ENCODE measurements at regions of chr3 and their contacts with region 1.

Region 1: GRCh38 chr3:58433400-58434169 is at the start of gene PDHB:
- DNase-seq: peak; percentile 93
- ATAC-seq: peak; percentile 94
- H3K4me3 ChIP-seq: peak within 1 kb of the TSS; percentile 75 to 93 (median 91)
- H3K4me3 Mint-ChIP-seq: peak within 1 kb of the TSS; percentile 97
- H3K27ac ChIP-seq: peak within 1 kb of the TSS; percentile 82 to 87
- H3K27ac Mint-ChIP-seq: peak within 1 kb of the TSS; percentile 98
- H3K4me1 ChIP-seq: peaks cover 9 to 22% of the 10 kb centered on the region in 2 donors
- H3K4me1 Mint-ChIP-seq: peaks cover 25% of the 10 kb centered on the region
- H3K27me3 ChIP-seq: no peaks in the 10 kb centered on the region
- H3K27me3 Mint-ChIP-seq: no peaks in the 10 kb centered on the region
- CTCF ChIP-seq: no peak
- total RNA-seq, gene PDHB: 59.0 and 67.2 TPM in 2 replicates

Region 2: DNA sequence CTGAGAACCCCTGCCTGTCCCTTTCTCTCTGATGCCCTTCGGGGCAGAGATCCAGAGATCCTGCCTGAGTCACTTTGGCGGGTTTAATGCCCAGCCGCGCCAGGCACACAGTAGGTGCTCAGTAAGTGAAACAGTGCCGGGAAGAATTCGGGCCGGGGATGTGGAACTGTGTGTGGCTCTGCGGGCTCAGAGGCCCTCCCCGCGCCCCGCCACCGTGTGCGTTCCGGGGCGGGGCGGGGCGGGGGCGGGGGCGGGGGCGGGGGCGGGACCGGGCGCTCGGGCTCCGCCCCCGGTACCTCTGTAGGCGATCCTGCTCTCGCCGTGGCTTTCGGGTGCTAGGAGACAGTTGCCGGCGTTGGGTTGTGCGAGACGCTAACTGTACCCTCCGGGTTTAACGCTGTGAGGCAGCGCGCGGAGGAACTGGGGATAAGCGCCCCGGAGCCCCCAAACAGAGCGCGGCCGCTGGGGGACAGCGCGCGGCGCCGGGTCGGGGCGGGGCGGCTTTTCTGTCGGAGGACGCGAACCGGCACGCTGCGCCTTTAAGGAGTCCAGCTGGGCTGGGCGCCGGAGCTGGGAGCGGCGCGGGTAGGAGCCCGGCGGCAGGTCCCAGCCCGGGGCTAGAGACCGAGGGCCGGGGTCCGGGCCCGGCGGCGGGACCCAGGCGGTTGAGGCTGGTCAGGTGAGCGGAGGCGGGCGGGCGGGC is 196.2 kb before region 1 on chr3 and contains the start of gene ABHD6:
- CTCF ChIA-PET with region 1: no interaction called
- POLR2A ChIA-PET with region 1: no interaction called
- intact Hi-C with region 1: loop called (anchors 5 kb)
- DNase-seq: peak; percentile 93
- ATAC-seq: peak; percentile 75
- H3K4me3 ChIP-seq: peak within 1 kb of the TSS; percentile 51 to 96 (median 93)
- H3K4me3 Mint-ChIP-seq: peak within 1 kb of the TSS; percentile 97
- H3K27ac ChIP-seq: peak within 1 kb of the TSS; percentile 63 to 86
- H3K27ac Mint-ChIP-seq: peak within 1 kb of the TSS; percentile 94
- H3K4me1 ChIP-seq: peaks cover 41 to 48% of the 10 kb centered on the region in 2 donors
- H3K4me1 Mint-ChIP-seq: peaks cover 70% of the 10 kb centered on the region
- H3K27me3 ChIP-seq: no peaks in the 10 kb centered on the region
- H3K27me3 Mint-ChIP-seq: no peaks in the 10 kb centered on the region
- CTCF ChIP-seq: peak; percentile 15
- total RNA-seq, gene ABHD6: 22.2 and 24.2 TPM in 2 replicates

Region 3: DNA sequence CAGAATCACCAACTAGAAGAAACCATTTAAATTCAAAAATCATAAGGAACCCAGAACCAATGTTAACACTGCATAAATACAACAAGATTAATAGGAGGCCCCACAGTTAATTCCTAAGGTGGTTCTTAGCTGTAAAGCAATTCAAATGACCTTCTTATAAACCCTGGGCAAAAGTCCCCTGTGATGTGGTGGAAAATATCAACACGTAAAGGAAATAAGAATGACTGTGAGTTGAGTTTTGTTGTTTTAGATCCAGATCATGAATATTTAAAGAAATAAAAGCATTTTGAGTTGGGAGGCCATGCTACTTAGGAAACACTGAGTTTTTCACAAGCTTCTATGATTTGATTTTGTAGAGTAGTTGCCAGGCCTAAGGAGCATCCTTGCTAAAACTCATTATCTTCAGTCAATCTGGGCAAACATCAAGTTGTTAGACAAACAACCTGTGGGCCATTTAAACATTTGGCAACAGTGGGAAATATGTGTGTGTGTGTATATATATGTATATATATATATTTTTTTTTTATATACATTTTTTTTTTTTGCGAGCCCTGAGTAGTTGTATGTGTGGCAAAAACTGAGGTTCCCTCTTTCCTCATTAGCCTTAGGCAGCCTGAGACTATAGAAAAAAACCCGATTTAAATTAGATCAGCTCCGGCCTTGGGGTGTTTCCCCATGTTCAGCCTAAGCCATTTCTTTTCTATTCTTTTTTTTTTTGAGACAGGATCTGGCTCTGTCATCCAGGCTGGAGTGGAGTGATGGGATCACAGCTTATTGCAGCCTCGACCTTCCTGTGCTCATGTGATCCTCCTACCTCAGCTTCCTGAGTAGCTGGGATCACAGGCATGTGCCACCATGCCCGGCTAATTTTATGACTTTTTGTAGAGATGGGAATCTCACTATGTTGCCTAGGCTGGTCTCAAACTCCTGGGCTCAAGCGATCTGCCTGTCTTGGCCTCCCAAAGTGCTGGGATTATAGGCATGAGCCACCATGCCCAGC is 108.9 kb before region 1 on chr3:
- CTCF ChIA-PET with region 1: no interaction called
- POLR2A ChIA-PET with region 1: no interaction called
- intact Hi-C with region 1: loop called (anchors 5 kb)
- DNase-seq: no peak
- ATAC-seq: peak; percentile 39
- H3K4me3 ChIP-seq: no peak overlapping the region
- H3K4me3 Mint-ChIP-seq: peak overlapping the region; percentile 57
- H3K27ac ChIP-seq: peak overlapping the region in 1 of 2 donors; percentile 62
- H3K27ac Mint-ChIP-seq: peak overlapping the region; percentile 74
- H3K4me1 ChIP-seq: peaks cover 21 to 29% of the 10 kb centered on the region in 2 donors
- H3K4me1 Mint-ChIP-seq: peaks cover 38% of the 10 kb centered on the region
- H3K27me3 ChIP-seq: no peaks in the 10 kb centered on the region
- H3K27me3 Mint-ChIP-seq: no peaks in the 10 kb centered on the region
- CTCF ChIP-seq: no peak

Region 4: GRCh38 chr3:58349792-58350626 is 83.6 kb before region 1 on chr3:
- CTCF ChIA-PET with region 1: interaction called, 4 read pairs
- POLR2A ChIA-PET with region 1: interaction called, 4 read pairs
- intact Hi-C with region 1: loop called (anchors 2 kb)
- DNase-seq: peak; percentile 84
- ATAC-seq: peak; percentile 78
- H3K4me3 ChIP-seq: peak overlapping the region; percentile 2 to 58 (median 31)
- H3K4me3 Mint-ChIP-seq: peak overlapping the region; percentile 66
- H3K27ac ChIP-seq: peak overlapping the region; percentile 80 to 97
- H3K27ac Mint-ChIP-seq: peak overlapping the region; percentile 100
- H3K4me1 ChIP-seq: peaks cover 90 to 98% of the 10 kb centered on the region in 2 donors
- H3K4me1 Mint-ChIP-seq: peaks cover 87% of the 10 kb centered on the region
- H3K27me3 ChIP-seq: no peaks in the 10 kb centered on the region
- H3K27me3 Mint-ChIP-seq: no peaks in the 10 kb centered on the region
- CTCF ChIP-seq: no peak

Region 5: GRCh38 chr3:58419780-58420507 is 13.6 kb before region 1 on chr3:
- CTCF ChIA-PET with region 1: interaction called, 4 read pairs
- POLR2A ChIA-PET with region 1: interaction called, 6 read pairs
- intact Hi-C with region 1: loop called (anchors 2 kb)
- DNase-seq: no peak
- ATAC-seq: peak; percentile 68
- H3K4me3 ChIP-seq: no peak overlapping the region
- H3K4me3 Mint-ChIP-seq: peak overlapping the region; percentile 54
- H3K27ac ChIP-seq: peak overlapping the region; percentile 42 to 69
- H3K27ac Mint-ChIP-seq: peak overlapping the region; percentile 84
- H3K4me1 ChIP-seq: peaks cover 6 to 25% of the 10 kb centered on the region in 2 donors
- H3K4me1 Mint-ChIP-seq: peaks cover 37% of the 10 kb centered on the region
- H3K27me3 ChIP-seq: no peaks in the 10 kb centered on the region
- H3K27me3 Mint-ChIP-seq: no peaks in the 10 kb centered on the region
- CTCF ChIP-seq: no peak

Region 6: GRCh38 chr3:58532794-58533220 is 99.2 kb after region 1 on chr3:
- CTCF ChIA-PET with region 1: no interaction called
- POLR2A ChIA-PET with region 1: no interaction called
- intact Hi-C with region 1: loop called (anchors 1 kb)
- DNase-seq: peak; percentile 89
- ATAC-seq: peak; percentile 99
- H3K4me3 ChIP-seq: no peak overlapping the region
- H3K4me3 Mint-ChIP-seq: no peak overlapping the region
- H3K27ac ChIP-seq: no peak overlapping the region
- H3K27ac Mint-ChIP-seq: peak overlapping the region; percentile 7
- H3K4me1 ChIP-seq: peaks cover 6 to 8% of the 10 kb centered on the region in 2 donors
- H3K4me1 Mint-ChIP-seq: peaks cover 6% of the 10 kb centered on the region
- H3K27me3 ChIP-seq: no peaks in the 10 kb centered on the region
- H3K27me3 Mint-ChIP-seq: no peaks in the 10 kb centered on the region
- CTCF ChIP-seq: peak; percentile 91

Measured in B cell (primary cell).